Posterior vena cava (tissue), 2 donors: ENCODE measurements at regions of chr2 and their contacts with region 1.

Region 1: GRCh38 chr2:38629684-38630083 is 27.0 kb upstream of the HNRNPLL start:
- DNase-seq: no peak

Region 2: GRCh38 chr2:38672445-38673391 is 43.0 kb after region 1 on chr2:
- intact Hi-C with region 1: loop called in 1 of 2 experiments (anchors 2 kb)
- DNase-seq: no peak